ENCODE measurements at regions of chr11 and their contacts with region 1.

Region 1: GRCh38 chr11:10864688-10865087 is 6.8 kb upstream of the ZBED5 start:
- DNase-seq: no peak
- H3K4me3 ChIP-seq: no peak overlapping the region
- H3K27ac ChIP-seq: peak overlapping the region; percentile 55 to 95 (median 92)
- H3K4me1 ChIP-seq: peaks cover 11 to 59% (median 45%) of the 10 kb centered on the region in 4 donors
- H3K27me3 ChIP-seq: no peaks in the 10 kb centered on the region
- CTCF ChIP-seq: no peak
- EP300 ChIP-seq: no peak
- POLR2A ChIP-seq: no peak

Region 2: DNA sequence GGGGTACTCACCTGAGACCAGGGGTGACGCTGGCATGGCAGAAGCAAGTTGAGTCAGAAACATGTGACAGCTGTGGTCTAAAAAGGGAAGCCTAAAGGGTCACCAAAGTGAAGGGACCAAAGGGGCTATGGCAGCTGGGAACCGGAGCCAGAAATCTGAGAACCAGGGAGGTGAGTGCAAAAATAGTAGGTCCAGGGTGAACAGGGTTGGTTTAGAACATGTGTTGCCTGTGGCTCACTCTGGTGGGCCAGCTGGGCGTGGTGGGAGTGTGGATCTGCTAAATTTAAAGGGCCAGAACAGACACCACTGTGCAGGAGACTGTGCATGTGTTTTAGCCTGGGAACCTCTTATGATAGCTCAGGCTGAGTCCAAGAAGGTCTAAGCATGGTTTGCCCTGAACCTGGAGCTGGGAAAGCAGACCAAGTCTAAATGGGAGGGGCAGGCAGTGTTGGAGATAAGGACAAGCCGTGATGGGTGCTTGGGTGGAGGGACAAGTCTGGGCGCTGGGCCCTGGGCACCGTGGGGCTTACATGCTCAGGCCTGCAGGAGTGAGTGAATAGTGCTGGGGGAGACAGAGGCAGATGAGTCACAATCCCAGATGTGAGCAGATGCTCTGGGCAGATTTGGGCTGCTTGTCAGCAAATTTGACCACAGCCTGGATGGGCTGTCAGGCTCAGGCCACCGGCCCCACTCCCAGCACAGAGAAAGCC is 34.6 kb after region 1 on chr11:
- intact Hi-C with region 1: loop called (anchors 5 kb)
- DNase-seq: no peak
- H3K4me3 ChIP-seq: no peak overlapping the region
- H3K27ac ChIP-seq: peak overlapping the region; percentile 87 to 93 (median 88)
- H3K4me1 ChIP-seq: peaks cover 32 to 42% (median 37%) of the 10 kb centered on the region in 4 donors
- H3K27me3 ChIP-seq: no peaks in the 10 kb centered on the region
- CTCF ChIP-seq: no peak
- EP300 ChIP-seq: no peak
- POLR2A ChIP-seq: no peak